Activated T-helper 1 cell treated with anti-CD3 and anti-CD28 coated beads, Interleukin-12 subunit alpha, Interleukin-12 subunit beta, Interleukin-2, Interleukin-4 antibody, amounts not matched to agents 30 ng/mL and 10 ng/mL and 1 ng/mL, durations not matched to agents 14 hours and 24 hours and 36 hours (primary cell): ENCODE measurements at regions of chr6 and their contacts with region 1.

Region 1: DNA sequence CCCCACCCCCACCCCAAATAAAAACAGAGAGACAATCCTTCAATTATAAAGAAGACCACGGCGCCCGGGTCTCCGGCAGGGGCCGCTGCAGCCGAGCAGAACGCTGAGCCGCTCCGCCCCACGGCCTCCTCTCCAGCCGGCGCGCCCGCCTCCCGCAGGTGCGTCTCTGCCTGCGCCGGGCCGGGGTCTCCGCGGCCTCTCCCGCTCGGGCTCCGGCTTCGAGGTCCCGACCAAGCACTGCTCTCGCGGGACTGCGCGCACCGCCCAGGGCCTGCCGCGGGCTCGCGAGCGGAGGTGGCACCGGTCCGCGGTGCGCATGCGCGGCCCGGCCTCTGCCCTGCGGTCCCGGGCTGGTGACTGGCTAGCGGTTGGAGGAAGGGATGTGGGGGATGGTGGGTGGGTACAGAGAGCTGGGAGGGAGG is 241 bp upstream of the SIRT5 start:
- DNase-seq: peak; percentile 90
- H3K4me3 Mint-ChIP-seq: peak overlapping the region; percentile 92
- H3K27ac Mint-ChIP-seq: peak overlapping the region; percentile 99
- H3K4me1 Mint-ChIP-seq: peaks cover 19% of the 10 kb centered on the region
- H3K27me3 Mint-ChIP-seq: peaks cover 9% of the 10 kb centered on the region

Region 2: GRCh38 chr6:13336553-13336952 is 237.6 kb before region 1 on chr6:
- intact Hi-C with region 1: loop called (anchors 1 kb)
- DNase-seq: peak; percentile 60
- H3K4me3 Mint-ChIP-seq: no peak overlapping the region
- H3K27ac Mint-ChIP-seq: no peak overlapping the region
- H3K4me1 Mint-ChIP-seq: peaks cover 43% of the 10 kb centered on the region
- H3K27me3 Mint-ChIP-seq: peaks cover 9% of the 10 kb centered on the region

Region 3: GRCh38 chr6:13427801-13428582 is 146.2 kb before region 1 on chr6:
- intact Hi-C with region 1: loop called (anchors 1 kb)
- DNase-seq: peak; percentile 57
- H3K4me3 Mint-ChIP-seq: peak overlapping the region; percentile 54
- H3K27ac Mint-ChIP-seq: peak overlapping the region; percentile 95
- H3K4me1 Mint-ChIP-seq: peaks cover 78% of the 10 kb centered on the region
- H3K27me3 Mint-ChIP-seq: no peaks in the 10 kb centered on the region

Region 4: GRCh38 chr6:13614926-13615798 is 41.0 kb after region 1 on chr6 and contains the start of gene NOL7:
- intact Hi-C with region 1: loop called (anchors 1 kb)
- DNase-seq: peak; percentile 98
- H3K4me3 Mint-ChIP-seq: peak within 1 kb of the TSS; percentile 99
- H3K27ac Mint-ChIP-seq: peak within 1 kb of the TSS; percentile 87
- H3K4me1 Mint-ChIP-seq: peaks cover 54% of the 10 kb centered on the region
- H3K27me3 Mint-ChIP-seq: no peaks in the 10 kb centered on the region
- total RNA-seq, gene NOL7: 97.7 and 100 TPM in 2 replicates

Region 5: DNA sequence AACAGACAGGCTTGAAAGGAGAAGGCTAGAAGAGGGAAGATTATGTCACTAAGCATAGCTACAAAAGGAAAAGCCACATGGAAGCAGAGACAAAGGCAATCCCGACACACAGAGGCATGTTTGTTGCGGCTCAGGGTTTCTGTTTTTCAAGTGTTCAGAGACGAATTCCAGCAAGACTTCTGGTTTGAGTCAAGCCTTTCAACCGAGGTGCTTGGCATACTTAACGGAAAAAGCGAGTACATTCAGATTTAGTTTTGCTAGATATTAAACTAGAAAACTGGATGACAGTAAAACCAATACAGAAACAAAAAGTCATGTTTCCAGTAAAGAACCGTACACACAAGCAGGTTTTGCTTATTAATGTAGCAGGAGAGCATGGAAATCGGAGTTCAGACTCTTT is 213.0 kb after region 1 on chr6:
- intact Hi-C with region 1: loop called (anchors 5 kb)
- DNase-seq: no peak
- H3K4me3 Mint-ChIP-seq: peak overlapping the region; percentile 41
- H3K27ac Mint-ChIP-seq: peak overlapping the region; percentile 82
- H3K4me1 Mint-ChIP-seq: peaks cover 33% of the 10 kb centered on the region
- H3K27me3 Mint-ChIP-seq: no peaks in the 10 kb centered on the region

Region 6: DNA sequence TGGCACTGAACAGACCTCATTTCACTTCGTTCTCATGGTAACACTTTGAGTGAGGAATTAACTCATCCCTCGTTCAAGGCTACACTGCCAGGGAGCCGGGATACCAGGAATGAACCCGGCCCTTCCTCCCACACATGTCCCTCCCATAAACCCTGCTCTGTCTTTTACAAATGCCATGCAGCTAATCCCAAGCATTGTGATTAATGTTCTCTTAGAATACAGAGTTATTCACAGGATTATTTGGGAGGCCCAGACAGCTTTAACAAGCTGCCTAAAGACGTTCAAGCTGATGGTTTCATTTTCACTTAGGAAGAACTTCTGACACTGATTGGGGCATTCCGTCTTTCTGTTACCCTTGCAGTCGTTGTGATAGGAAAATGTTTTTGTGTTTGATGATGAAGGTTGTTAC is 500.9 kb after region 1 on chr6:
- intact Hi-C with region 1: loop called (anchors 2 kb)
- DNase-seq: peak; percentile 25
- H3K4me3 Mint-ChIP-seq: peak overlapping the region; percentile 84
- H3K27ac Mint-ChIP-seq: peak overlapping the region; percentile 94
- H3K4me1 Mint-ChIP-seq: peaks cover 68% of the 10 kb centered on the region
- H3K27me3 Mint-ChIP-seq: no peaks in the 10 kb centered on the region